ENCODE measurements at regions of chr9 and their contacts with region 1.

Region 1: GRCh38 chr9:129080602-129081387 is at the start of gene DOLPP1:
- DNase-seq: peak; percentile 99
- ATAC-seq: peak; percentile 98
- H3K4me3 Mint-ChIP-seq: peak within 1 kb of the TSS; percentile 83
- H3K27ac Mint-ChIP-seq: peak within 1 kb of the TSS; percentile 63
- H3K4me1 Mint-ChIP-seq: peaks cover 20% of the 10 kb centered on the region
- H3K27me3 Mint-ChIP-seq: no peaks in the 10 kb centered on the region
- total RNA-seq, gene DOLPP1: 15.1 to 16.4 TPM

Region 2: GRCh38 chr9:128688512-128689292 is 392.1 kb before region 1 on chr9 and contains the start of gene SET:
- CTCF ChIA-PET with region 1: no interaction called
- POLR2A ChIA-PET with region 1: interaction called, 3 read pairs
- intact Hi-C with region 1: loop called in 1 of 2 experiments (anchors 1 kb)
- DNase-seq: peak; percentile 96
- ATAC-seq: peak; percentile 71
- H3K4me3 Mint-ChIP-seq: peak within 1 kb of the TSS; percentile 99
- H3K27ac Mint-ChIP-seq: peak within 1 kb of the TSS; percentile 94
- H3K4me1 Mint-ChIP-seq: peaks cover 61% of the 10 kb centered on the region
- H3K27me3 Mint-ChIP-seq: no peaks in the 10 kb centered on the region
- total RNA-seq, gene SET: 673 to 682 TPM

Region 3: GRCh38 chr9:129028192-129028957 is 52.4 kb before region 1 on chr9 and contains the start of gene SH3GLB2:
- CTCF ChIA-PET with region 1: no interaction called
- POLR2A ChIA-PET with region 1: no interaction called
- intact Hi-C with region 1: loop called in 1 of 2 experiments (anchors 1 kb)
- DNase-seq: peak; percentile 98
- ATAC-seq: peak; percentile 93
- H3K4me3 Mint-ChIP-seq: peak within 1 kb of the TSS; percentile 81
- H3K27ac Mint-ChIP-seq: peak within 1 kb of the TSS; percentile 52
- H3K4me1 Mint-ChIP-seq: peaks cover 17% of the 10 kb centered on the region
- H3K27me3 Mint-ChIP-seq: no peaks in the 10 kb centered on the region
- total RNA-seq, gene SH3GLB2: 49.1 to 53.7 TPM

Region 4: GRCh38 chr9:129036241-129036922 is 44.4 kb before region 1 on chr9 and contains the start of gene MIGA2:
- CTCF ChIA-PET with region 1: no interaction called
- POLR2A ChIA-PET with region 1: interaction called, 3 read pairs
- intact Hi-C with region 1: loop called (anchors 1 kb)
- DNase-seq: peak; percentile 96
- ATAC-seq: peak; percentile 99
- H3K4me3 Mint-ChIP-seq: peak within 1 kb of the TSS; percentile 98
- H3K27ac Mint-ChIP-seq: peak within 1 kb of the TSS; percentile 83
- H3K4me1 Mint-ChIP-seq: peaks cover 27% of the 10 kb centered on the region
- H3K27me3 Mint-ChIP-seq: no peaks in the 10 kb centered on the region
- total RNA-seq, gene MIGA2: 15.7 to 25.8 TPM